ENCODE measurements at regions of chr12 and their contacts with region 1.

Region 1: GRCh38 chr12:110501752-110502738 is at the starts of genes RAD9B and VPS29:
- DNase-seq: peak; percentile 99
- ATAC-seq: peak; percentile 94 to 98 (median 96)
- H3K4me3 ChIP-seq: peak within 1 kb of the TSS; percentile 98
- H3K27ac ChIP-seq: peak within 1 kb of the TSS; percentile 96
- H3K4me1 ChIP-seq: peaks cover 34% of the 10 kb centered on the region
- H3K27me3 ChIP-seq: no peaks in the 10 kb centered on the region
- CTCF ChIP-seq: no peak
- total RNA-seq, gene RAD9B: 1.1 to 4.2 (median 1.4) TPM
- total RNA-seq, gene VPS29: 70.4 to 136 (median 121) TPM

Region 2: DNA sequence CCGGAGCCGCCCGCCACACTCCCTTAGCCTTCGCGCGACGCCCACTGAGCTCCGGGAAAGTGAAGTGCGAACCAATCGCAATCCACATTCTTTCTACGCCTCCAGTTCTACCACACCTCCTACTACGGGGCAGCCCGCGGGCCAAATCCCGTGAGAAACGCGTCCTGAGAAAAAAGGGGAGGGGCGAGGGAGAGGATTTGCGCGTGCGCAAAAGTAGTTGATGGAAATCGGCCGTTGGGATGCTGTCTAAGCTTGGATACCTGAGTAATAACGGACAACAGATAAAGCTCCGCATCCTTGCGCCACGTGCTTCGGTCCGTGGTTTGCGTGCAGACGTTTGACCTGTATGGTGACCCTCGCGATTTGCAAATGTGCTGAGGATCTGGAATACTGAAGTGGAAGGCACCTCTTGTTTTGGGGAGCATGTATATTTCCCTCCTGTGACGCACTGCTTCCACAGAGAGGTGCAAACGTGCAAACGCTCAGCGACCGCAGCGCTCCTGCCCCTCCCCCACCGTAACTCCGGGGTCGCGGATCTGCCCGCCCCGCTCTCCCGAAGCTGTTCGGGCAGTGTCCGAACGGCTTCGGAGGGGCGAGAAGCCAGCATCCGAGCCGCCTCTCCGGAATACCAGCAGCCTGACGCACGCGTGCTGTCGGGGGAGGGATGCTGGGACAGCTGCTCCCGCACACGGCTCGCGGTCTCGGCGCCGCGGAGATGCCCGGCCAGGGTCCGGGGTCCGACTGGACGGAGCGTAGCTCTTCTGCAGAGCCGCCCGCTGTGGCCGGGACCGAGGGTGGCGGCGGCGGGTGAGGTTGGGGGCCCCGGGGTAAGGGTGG is 33.6 kb before region 1 on chr12 and contains the starts of genes FAM216A and GPN3:
- intact Hi-C with region 1: loop called (anchors 2 to 5 kb)
- DNase-seq: peak; percentile 96 to 98
- ATAC-seq: peak; percentile 92 to 95 (median 94)
- H3K4me3 ChIP-seq: peak within 1 kb of the TSS; percentile 72
- H3K27ac ChIP-seq: peak within 1 kb of the TSS; percentile 85
- H3K4me1 ChIP-seq: peaks cover 14% of the 10 kb centered on the region
- H3K27me3 ChIP-seq: no peaks in the 10 kb centered on the region
- CTCF ChIP-seq: no peak
- total RNA-seq, gene FAM216A: 2.1 to 8.3 (median 3.4) TPM
- total RNA-seq, gene GPN3: 25.7 to 34.9 (median 27.6) TPM

Region 3: GRCh38 chr12:110563702-110564640 is 61.9 kb after region 1 on chr12:
- intact Hi-C with region 1: no loop called
- DNase-seq: no peak
- ATAC-seq: peak; percentile 78 to 88 (median 86)
- H3K4me3 ChIP-seq: peak overlapping the region; percentile 24
- H3K27ac ChIP-seq: peak overlapping the region; percentile 85
- H3K4me1 ChIP-seq: peaks cover 69% of the 10 kb centered on the region
- H3K27me3 ChIP-seq: no peaks in the 10 kb centered on the region
- CTCF ChIP-seq: no peak

Region 4: GRCh38 chr12:110698171-110698902 is 196.3 kb after region 1 on chr12:
- intact Hi-C with region 1: no loop called
- DNase-seq: peak; percentile 75 to 88
- ATAC-seq: peak; percentile 82 to 90 (median 88)
- H3K4me3 ChIP-seq: peak overlapping the region; percentile 46
- H3K27ac ChIP-seq: peak overlapping the region; percentile 16
- H3K4me1 ChIP-seq: peaks cover 13% of the 10 kb centered on the region
- H3K27me3 ChIP-seq: no peaks in the 10 kb centered on the region
- CTCF ChIP-seq: peak; percentile 66